HepG2 (cell line): ENCODE measurements at regions of chr10 and their contacts with region 1.

Region 1: GRCh38 chr10:14325325-14325955 is 5.3 kb downstream of the FRMD4A start:
- DNase-seq: peak; percentile 24
- ATAC-seq: no peak
- H3K4me3 ChIP-seq: no peak overlapping the region
- H3K27ac ChIP-seq: no peak overlapping the region
- H3K4me1 ChIP-seq: no peaks in the 10 kb centered on the region
- H3K27me3 ChIP-seq: peaks cover 1 to 20% of the 10 kb centered on the region in 2 experiments; a peak in 3 of 5 replicates
- CTCF ChIP-seq: peak; percentile 45
- EP300 ChIP-seq: no peak
- POLR2A ChIP-seq: no peak
- RAD21 ChIP-seq: no peak

Region 2: DNA sequence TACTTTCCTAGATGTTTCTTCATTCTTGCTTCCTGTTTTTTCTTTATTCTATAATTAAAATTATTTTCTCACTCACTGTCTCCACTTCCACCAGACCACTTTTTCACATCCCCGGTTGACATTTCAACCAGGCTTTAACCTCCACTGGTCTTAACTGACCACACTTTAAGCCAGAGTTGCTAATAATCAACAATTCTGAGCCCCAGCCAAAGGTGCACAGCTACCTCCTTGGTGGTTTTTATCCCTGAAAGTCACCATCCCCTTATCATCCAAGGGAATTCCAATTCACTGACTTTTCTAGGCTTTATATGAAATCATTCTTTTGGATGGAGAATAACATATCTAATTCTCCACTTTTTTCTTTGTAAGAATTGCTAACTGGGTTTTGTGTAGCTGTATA is 133.6 kb before region 1 on chr10:
- CTCF ChIA-PET with region 1: interaction called, 5 read pairs
- POLR2A ChIA-PET with region 1: no interaction called
- in situ Hi-C with region 1: no loop called
- intact Hi-C with region 1: loop called (anchors 10 kb)
- DNase-seq: no peak
- ATAC-seq: no peak
- H3K4me3 ChIP-seq: no peak overlapping the region
- H3K27ac ChIP-seq: no peak overlapping the region
- H3K4me1 ChIP-seq: no peaks in the 10 kb centered on the region
- H3K27me3 ChIP-seq: peaks cover 1 to 5% of the 10 kb centered on the region in 2 experiments; a peak in 3 of 5 replicates
- CTCF ChIP-seq: no peak
- EP300 ChIP-seq: no peak
- POLR2A ChIP-seq: no peak
- RAD21 ChIP-seq: no peak